ENCODE measurements at regions of chr1 and their contacts with region 1.

Region 1: DNA sequence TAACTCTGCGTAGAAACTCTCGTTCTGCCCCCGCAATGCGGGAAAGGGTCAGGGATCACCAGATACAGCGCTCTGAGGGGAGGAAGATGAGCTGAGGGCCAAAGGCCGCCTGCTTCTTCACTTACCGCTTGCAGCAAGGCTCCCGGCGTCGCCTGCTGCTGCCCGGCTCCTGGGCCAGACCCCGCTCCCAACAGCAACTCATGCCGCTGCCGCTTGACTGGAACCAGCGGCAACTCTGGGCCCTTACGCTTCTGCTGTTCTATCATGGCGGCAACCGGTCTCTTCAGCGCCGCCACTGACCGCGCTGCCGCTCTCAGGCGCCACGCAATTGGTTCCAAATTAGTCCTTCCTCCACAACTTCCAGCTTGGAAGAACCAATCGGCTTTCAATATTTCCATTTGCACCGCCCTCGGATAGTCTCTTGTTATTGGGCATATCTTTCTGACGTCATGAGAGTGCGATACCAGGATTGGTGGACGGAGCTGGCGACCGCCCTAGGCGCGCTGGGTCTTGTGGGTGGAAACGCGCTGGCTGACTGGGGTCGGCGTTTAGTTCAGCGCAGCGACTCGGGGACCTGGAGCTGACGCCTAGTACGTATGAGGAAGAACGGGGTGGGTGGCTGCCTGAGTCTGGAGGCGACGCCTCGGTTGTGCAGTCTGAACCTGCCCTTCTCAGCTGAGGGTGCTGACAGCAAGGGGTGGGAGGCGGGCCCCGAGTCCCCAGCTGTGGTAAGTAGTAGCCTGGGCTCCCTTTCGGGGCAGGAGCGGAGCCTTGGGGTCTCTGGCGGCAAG is at the starts of genes SNRNP40 and ZCCHC17:
- DNase-seq: peak; percentile 73 to 99 (median 98)
- ATAC-seq: peak; percentile 97
- H3K4me3 ChIP-seq: peak within 1 kb of the TSS; percentile 89
- H3K4me3 Mint-ChIP-seq: no peak within 1 kb of the TSS
- H3K27ac ChIP-seq: peak within 1 kb of the TSS; percentile 92
- H3K27ac Mint-ChIP-seq: peak within 1 kb of the TSS in 1 of 9 donors; percentile 84
- H3K4me1 ChIP-seq: peaks cover 18 to 24% of the 10 kb centered on the region in 2 donors
- H3K4me1 Mint-ChIP-seq: peaks cover 12 to 41% (median 27%) of the 10 kb centered on the region in 7 donors
- H3K27me3 ChIP-seq: no peaks in the 10 kb centered on the region
- H3K27me3 Mint-ChIP-seq: no peaks in the 10 kb centered on the region
- total RNA-seq, gene SNRNP40: 53.5 to 88.5 (median 62.1) TPM
- total RNA-seq, gene ZCCHC17: 10.3 to 23.8 (median 20.1) TPM

Region 2: DNA sequence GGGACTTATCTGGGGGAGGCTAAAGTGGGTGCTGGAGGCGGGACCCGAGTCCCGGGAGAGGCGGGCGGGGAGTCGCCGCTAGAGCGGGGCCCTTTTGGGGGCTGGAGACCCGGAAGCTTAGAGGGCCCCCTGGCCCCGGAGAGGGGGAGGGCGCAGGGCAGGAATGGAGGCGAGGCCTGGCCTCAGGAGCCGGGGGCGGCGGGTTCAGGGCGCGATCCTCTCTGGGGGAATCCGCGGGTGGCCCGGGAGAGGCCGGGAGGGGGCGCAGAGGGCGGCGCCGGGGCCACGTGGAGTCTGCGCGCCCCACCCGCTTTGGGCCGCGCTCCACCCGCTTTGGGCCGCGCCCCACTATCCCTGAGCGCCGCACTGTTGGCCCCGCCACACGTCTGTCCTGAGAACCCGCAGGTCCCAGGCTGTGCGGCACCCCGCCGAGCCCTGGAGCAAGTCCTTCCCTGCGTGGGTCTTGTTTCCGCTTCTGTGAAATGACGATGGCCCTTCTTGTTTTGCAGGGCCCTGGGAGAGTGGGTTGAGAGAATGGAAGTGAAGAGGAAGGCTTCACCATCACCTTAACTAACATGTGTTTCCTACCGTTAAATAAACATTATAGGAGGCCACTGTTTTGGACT is 141.4 kb before region 1 on chr1:
- CTCF ChIA-PET with region 1: no interaction called
- POLR2A ChIA-PET with region 1: no interaction called
- intact Hi-C with region 1: loop called (anchors 1 kb)
- DNase-seq: peak; percentile 20 to 82 (median 37)
- ATAC-seq: peak; percentile 81
- H3K4me3 ChIP-seq: peak overlapping the region; percentile 70
- H3K4me3 Mint-ChIP-seq: peak overlapping the region; percentile 84 to 94 (median 90)
- H3K27ac ChIP-seq: peak overlapping the region; percentile 65
- H3K27ac Mint-ChIP-seq: peak overlapping the region; percentile 41 to 86 (median 77)
- H3K4me1 ChIP-seq: peaks cover 5 to 11% of the 10 kb centered on the region in 2 donors
- H3K4me1 Mint-ChIP-seq: peaks cover 4 to 11% (median 10%) of the 10 kb centered on the region in 7 donors
- H3K27me3 ChIP-seq: no peaks in the 10 kb centered on the region
- H3K27me3 Mint-ChIP-seq: no peaks in the 10 kb centered on the region

Region 3: DNA sequence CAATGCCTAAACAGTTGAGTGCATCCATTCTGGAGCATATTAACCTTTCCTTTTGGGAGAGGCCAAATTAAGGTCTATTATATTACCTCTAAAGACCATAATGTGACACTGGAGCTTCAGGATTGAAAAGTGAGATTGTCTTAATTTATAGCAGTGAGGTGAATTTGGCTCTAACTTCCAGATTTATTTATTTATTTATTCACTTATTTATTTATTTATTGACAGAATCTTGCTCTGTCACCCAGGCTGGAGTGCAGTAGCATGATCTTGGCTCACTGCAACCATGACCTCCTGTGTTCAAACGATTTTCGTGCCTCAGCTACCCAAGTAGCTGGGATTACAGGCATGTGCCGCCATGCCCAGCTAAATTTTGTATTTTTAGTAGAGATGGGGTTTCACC is 19.2 kb after region 1 on chr1:
- CTCF ChIA-PET with region 1: no interaction called
- POLR2A ChIA-PET with region 1: no interaction called
- intact Hi-C with region 1: no loop called
- DNase-seq: no peak
- ATAC-seq: no peak
- H3K4me3 ChIP-seq: no peak overlapping the region
- H3K4me3 Mint-ChIP-seq: no peak overlapping the region
- H3K27ac ChIP-seq: no peak overlapping the region
- H3K27ac Mint-ChIP-seq: no peak overlapping the region
- H3K4me1 ChIP-seq: no peaks in the 10 kb centered on the region
- H3K4me1 Mint-ChIP-seq: peaks cover 0 to 5% (median 0%) of the 10 kb centered on the region in 7 donors
- H3K27me3 ChIP-seq: no peaks in the 10 kb centered on the region
- H3K27me3 Mint-ChIP-seq: no peaks in the 10 kb centered on the region

Region 4: DNA sequence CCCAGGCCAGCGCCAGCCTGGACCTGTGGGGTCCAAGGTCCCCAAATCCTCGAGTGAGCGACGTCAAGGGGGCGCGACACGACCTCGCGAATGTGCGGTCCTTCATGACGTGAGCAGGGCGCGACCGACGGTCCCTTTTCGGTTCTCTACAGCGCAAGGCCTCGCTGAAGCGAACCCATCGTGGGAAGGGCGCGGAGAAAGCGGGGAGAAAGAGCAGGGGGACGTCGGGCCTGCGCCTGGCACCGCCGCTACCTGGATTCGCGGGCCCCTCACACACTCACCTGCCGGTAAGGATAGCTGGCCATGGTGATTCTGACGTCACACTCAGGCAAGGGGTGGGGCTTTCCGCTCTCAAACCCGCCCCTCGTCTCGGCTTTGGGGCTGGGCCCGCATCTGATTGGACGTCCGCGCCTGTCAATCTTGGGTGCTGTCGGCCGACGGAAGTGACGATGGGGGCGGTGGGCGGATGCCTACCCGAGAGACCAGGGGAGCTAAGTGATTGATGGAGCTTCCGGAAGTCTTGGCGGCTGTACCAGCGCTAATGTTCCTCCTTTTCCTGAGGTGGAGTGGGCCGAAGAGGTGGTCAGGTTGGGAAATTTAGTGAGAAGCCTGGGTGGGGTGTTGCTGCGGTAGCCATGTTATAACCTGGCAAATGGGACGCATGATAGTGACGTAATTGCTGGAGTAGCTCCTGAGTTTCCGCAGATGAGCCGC is 348.0 kb after region 1 on chr1 and contains the start of gene PEF1:
- CTCF ChIA-PET with region 1: no interaction called
- POLR2A ChIA-PET with region 1: interaction called, 4 read pairs
- intact Hi-C with region 1: loop called in 1 of 2 experiments (anchors 2 kb)
- DNase-seq: peak; percentile 97 to 100 (median 99)
- ATAC-seq: peak; percentile 94
- H3K4me3 ChIP-seq: peak within 1 kb of the TSS; percentile 91
- H3K4me3 Mint-ChIP-seq: peak within 1 kb of the TSS; percentile 92 to 100 (median 98)
- H3K27ac ChIP-seq: peak within 1 kb of the TSS; percentile 98
- H3K27ac Mint-ChIP-seq: peak within 1 kb of the TSS; percentile 98 to 100 (median 99)
- H3K4me1 ChIP-seq: peaks cover 27 to 30% of the 10 kb centered on the region in 2 donors
- H3K4me1 Mint-ChIP-seq: peaks cover 18 to 47% (median 40%) of the 10 kb centered on the region in 7 donors
- H3K27me3 ChIP-seq: no peaks in the 10 kb centered on the region
- H3K27me3 Mint-ChIP-seq: no peaks in the 10 kb centered on the region
- total RNA-seq, gene PEF1: 37.7 to 49.8 (median 40.8) TPM